ENCODE measurements at regions of chr21 and their contacts with region 1.

Region 1: DNA sequence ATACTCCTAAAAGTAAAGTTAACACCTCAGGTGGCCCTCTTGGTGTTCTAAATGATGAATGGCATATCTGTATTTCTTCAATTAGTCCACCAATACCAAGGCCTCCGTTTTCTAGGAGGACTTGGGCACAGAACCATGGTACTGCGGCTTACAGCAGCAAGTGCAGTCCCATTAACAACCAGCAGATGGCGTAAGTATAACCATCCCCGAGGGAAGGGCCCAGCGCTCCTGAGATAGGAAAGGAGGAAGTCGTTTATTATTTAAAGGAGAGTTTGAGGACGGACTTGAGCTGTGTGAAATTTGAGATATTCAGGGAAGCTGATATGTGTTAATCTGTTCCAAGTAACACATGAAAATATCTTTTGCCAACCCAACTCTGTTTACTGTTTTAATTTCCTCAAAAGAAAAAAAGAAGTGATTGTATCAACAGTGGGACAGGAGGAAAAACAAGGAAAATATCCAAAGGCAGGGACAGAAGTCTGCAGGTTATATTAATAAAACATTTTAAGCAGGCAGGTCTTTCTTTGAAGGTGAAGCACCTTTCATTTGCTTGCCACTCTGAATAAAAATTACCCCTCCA is 37.7 kb upstream of the KCNJ15 start:
- DNase-seq: no peak
- ATAC-seq: peak; percentile 76
- H3K4me3 ChIP-seq: no peak overlapping the region
- H3K27ac ChIP-seq: no peak overlapping the region
- H3K4me1 ChIP-seq: no peaks in the 10 kb centered on the region
- H3K27me3 ChIP-seq: no peaks in the 10 kb centered on the region
- CTCF ChIP-seq: peak; percentile 77 to 90 (median 81)
- EP300 ChIP-seq: no peak
- POLR2A ChIP-seq: no peak
- RAD21 ChIP-seq: peak; percentile 75

Region 2: GRCh38 chr21:38170280-38170679 is 48.9 kb before region 1 on chr21:
- CTCF ChIA-PET with region 1: interaction called, 16 read pairs
- POLR2A ChIA-PET with region 1: no interaction called
- RAD21 ChIA-PET with region 1: no interaction called
- SMC1A ChIA-PET with region 1: no interaction called
- in situ Hi-C with region 1: no loop called
- intact Hi-C with region 1: loop called (anchors 5 kb)
- DNase-seq: no peak
- ATAC-seq: peak; percentile 76
- H3K4me3 ChIP-seq: no peak overlapping the region
- H3K27ac ChIP-seq: no peak overlapping the region
- H3K4me1 ChIP-seq: no peaks in the 10 kb centered on the region
- H3K27me3 ChIP-seq: no peaks in the 10 kb centered on the region; a peak in 1 of 4 replicates
- CTCF ChIP-seq: peak; percentile 36 to 82 (median 68); a peak in 5 of 6 replicates
- EP300 ChIP-seq: no peak
- POLR2A ChIP-seq: no peak
- RAD21 ChIP-seq: peak; percentile 62

Region 3: DNA sequence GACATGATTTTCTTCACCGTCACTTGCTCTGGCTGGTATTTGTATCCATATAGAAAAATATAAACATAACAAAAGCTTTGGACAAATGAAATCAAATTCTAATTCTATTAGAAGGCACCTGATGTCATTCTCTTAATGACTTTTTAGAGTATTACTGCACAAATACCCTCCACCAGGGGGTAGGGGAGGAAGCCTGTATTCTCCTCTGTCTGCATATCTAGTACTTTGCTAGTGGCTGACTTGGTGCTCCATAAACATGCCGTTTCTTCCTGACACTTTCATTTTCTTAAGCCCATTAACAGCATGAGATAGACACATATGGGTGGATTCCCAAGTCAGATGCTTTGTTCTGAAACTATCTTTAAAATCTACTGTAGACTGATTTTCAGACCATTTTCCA is 17.1 kb after region 1 on chr21:
- CTCF ChIA-PET with region 1: interaction called, 20 read pairs
- POLR2A ChIA-PET with region 1: interaction called, 3 read pairs
- RAD21 ChIA-PET with region 1: interaction called, 3 read pairs
- SMC1A ChIA-PET with region 1: interaction called, 33 read pairs
- in situ Hi-C with region 1: no loop called
- intact Hi-C with region 1: no loop called
- DNase-seq: no peak
- ATAC-seq: peak; percentile 66
- H3K4me3 ChIP-seq: no peak overlapping the region
- H3K27ac ChIP-seq: no peak overlapping the region
- H3K4me1 ChIP-seq: no peaks in the 10 kb centered on the region; the same call in 1 of the 2 replicates
- H3K27me3 ChIP-seq: no peaks in the 10 kb centered on the region
- CTCF ChIP-seq: 0 out of 6 replicates have a peak, but pooled peaks of 1 of the 3 experiments have one; percentile 8
- EP300 ChIP-seq: no peak
- POLR2A ChIP-seq: no peak
- RAD21 ChIP-seq: no peak

Region 4: DNA sequence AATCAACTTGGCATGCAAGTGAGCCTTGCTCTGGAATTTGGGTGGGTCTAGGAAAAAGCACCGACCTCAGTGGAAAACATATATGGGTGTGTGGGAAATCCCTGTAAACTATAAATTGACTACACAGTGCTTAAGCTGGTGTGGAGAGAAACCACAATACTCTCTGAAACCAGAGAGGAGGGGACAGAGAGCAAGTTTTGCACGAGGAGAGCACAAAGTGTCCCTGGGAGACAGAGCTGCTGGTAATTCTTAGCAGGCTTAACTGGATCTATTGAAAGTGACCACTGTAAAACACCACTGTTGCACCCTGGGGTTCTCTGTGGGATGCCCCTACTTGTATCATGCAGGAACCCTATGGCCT is 50.4 kb after region 1 on chr21:
- CTCF ChIA-PET with region 1: interaction called, 18 read pairs
- POLR2A ChIA-PET with region 1: no interaction called
- RAD21 ChIA-PET with region 1: interaction called, 5 read pairs
- SMC1A ChIA-PET with region 1: interaction called, 32 read pairs
- in situ Hi-C with region 1: no loop called
- intact Hi-C with region 1: loop called (anchors 1 kb)
- DNase-seq: peak; percentile 87
- ATAC-seq: peak; percentile 94
- H3K4me3 ChIP-seq: peak overlapping the region; percentile 32; the same call in 1 of the 2 replicates
- H3K27ac ChIP-seq: peak overlapping the region; percentile 96
- H3K4me1 ChIP-seq: peaks cover 40% of the 10 kb centered on the region
- H3K27me3 ChIP-seq: no peaks in the 10 kb centered on the region
- CTCF ChIP-seq: no peak
- EP300 ChIP-seq: peak; percentile 76 to 79; a peak in 2 of 4 replicates
- POLR2A ChIP-seq: no peak
- RAD21 ChIP-seq: no peak

Region 5: DNA sequence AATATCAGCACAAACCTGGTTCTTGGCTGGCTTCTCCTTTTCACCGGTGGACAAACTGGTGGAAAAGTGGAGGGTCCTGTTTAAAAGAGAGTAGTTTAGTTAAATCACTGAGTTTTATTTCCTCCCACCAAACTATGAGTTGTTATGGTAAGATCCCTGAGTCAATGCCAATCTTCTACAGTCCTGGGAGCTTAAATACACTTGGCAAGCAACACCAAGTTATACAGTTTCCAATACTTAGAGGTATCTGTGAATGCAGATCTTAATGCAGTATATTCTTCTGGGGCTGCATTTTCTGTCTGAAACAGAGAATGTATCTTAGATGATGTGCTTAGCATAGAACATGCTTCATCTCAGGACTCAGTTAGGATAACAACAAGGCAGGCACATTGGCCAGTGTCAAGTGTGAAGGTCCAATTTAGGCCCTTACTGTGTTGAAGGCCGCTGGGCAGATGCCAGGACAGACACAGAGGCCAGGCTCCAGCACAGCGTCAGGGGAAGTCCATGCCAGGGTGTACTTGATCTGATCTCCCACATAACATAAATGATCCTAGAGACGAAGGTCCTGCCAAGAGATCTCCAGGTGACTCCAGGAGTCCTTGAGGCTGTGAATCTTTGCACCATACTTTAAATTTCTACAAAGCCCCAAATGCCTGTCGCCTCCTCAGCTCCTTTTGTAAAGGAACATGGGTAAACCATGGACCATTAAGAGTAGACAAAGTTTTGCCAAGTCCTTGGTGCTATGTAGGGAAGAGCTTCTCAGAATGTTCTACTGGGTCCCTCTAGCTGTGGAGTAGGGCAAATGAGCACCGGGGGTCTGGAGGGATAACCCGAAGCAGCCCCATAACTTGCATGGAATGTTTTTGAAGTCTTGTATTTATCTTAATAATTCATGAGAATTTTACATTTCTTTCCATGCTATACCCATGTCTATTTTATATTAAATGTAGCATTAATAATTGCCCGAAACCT is 114.4 kb after region 1 on chr21:
- CTCF ChIA-PET with region 1: interaction called, 31 read pairs
- POLR2A ChIA-PET with region 1: no interaction called
- RAD21 ChIA-PET with region 1: interaction called, 16 read pairs
- SMC1A ChIA-PET with region 1: interaction called, 9 read pairs
- in situ Hi-C with region 1: no loop called
- intact Hi-C with region 1: loop called (anchors 1 kb)
- DNase-seq: no peak
- ATAC-seq: peak; percentile 73
- H3K4me3 ChIP-seq: no peak overlapping the region
- H3K27ac ChIP-seq: no peak overlapping the region
- H3K4me1 ChIP-seq: no peaks in the 10 kb centered on the region
- H3K27me3 ChIP-seq: no peaks in the 10 kb centered on the region
- CTCF ChIP-seq: peak in 2 of 3 experiments; percentile 31 to 32; a peak in 3 of 6 replicates
- EP300 ChIP-seq: no peak
- POLR2A ChIP-seq: no peak
- RAD21 ChIP-seq: peak; percentile 50